ENCODE measurements at regions of chr14 and their contacts with region 1.

Region 1: DNA sequence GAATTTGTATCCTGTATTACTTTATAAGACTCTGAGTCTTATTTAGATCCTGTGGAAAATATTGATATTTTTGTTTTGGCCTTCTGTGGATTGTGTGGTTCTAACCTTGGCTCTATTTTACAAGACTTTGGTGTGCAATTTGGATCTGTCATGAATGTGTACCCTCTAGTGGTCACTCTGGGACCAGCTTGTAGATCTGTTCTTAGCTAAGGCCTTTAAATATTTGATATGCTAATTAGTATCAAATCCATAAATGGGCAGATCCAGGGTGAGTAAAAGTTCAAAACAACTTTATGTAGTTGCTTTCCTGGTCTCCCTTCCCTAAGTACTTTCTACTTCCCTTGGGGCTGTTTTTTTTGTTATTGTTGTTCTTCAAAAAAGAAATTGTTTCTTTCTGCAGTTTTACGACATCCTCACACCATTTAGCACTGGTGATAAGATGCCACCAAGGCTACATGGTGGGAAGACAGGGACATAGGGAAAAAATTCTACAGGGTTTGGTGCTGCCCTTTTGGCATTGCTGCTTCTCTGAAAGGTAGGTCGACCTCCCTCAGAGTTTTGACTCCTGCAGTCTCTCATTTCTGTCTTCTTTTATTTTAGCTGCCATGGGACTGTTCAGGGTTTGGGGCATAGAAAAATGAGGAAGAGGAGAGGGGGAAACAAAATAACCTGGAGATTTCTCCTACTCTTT is 238.5 kb downstream of the GPHN start:
- DNase-seq: peak; percentile 57
- ATAC-seq: peak; percentile 81
- H3K4me3 ChIP-seq: no peak overlapping the region
- H3K27ac ChIP-seq: no peak overlapping the region
- H3K4me1 ChIP-seq: no peaks in the 10 kb centered on the region
- H3K27me3 ChIP-seq: no peaks in the 10 kb centered on the region
- CTCF ChIP-seq: peak; percentile 30 to 81 (median 74); a peak in 5 of 6 replicates
- POLR2A ChIP-seq: no peak
- RAD21 ChIP-seq: peak; percentile 52

Region 2: DNA sequence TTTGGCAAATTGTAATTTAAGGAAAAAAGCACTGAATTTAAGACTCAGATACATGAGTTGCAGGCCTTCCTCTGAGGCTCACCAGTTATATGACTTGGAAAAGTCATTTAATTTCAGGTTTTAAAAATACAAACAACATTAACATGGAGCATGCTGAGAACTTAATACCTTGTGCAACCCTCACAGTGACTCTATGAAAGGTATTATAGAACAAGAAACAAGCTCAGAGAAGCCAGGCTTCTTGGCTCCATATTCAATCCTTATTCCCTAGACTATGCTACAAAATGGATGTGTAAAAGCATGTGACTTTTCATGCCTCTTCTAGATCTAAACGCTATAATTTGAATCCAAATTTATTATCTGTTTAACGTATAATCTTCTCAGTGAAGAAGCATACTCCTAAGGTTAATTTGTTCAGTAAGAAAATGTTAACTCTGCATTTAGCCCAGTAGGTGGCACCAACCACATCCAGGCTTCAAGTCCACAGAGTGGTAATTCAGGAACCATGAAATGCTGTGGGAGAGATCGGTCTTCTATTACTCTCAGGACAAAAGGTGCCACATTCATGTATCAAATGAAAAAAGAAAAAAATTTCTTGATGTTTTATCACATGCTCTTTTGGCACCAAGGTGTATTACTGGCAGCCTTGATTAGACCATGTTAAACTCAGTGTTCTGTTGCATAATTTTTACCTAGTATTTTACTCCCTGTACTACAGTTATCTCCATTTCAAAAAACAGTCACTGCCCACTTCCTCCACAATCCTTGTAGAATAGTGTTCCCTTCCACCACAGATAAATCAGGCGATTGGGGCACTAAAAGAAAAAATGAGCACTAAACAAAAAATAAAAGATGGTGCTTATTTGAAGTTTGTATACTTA is 251.0 kb before region 1 on chr14:
- CTCF ChIA-PET with region 1: no interaction called
- POLR2A ChIA-PET with region 1: no interaction called
- RAD21 ChIA-PET with region 1: no interaction called
- intact Hi-C with region 1: loop called (anchors 10 kb)
- DNase-seq: peak; percentile 39
- ATAC-seq: peak; percentile 98
- H3K4me3 ChIP-seq: no peak overlapping the region
- H3K27ac ChIP-seq: no peak overlapping the region
- H3K4me1 ChIP-seq: no peaks in the 10 kb centered on the region
- H3K27me3 ChIP-seq: no peaks in the 10 kb centered on the region
- CTCF ChIP-seq: peak; percentile 54 to 80 (median 68); a peak in 5 of 6 replicates
- POLR2A ChIP-seq: no peak
- RAD21 ChIP-seq: peak; percentile 71

Region 3: GRCh38 chr14:66624299-66624937 is 122.0 kb before region 1 on chr14:
- CTCF ChIA-PET with region 1: interaction called, 6 read pairs
- POLR2A ChIA-PET with region 1: no interaction called
- RAD21 ChIA-PET with region 1: interaction called in 1 of 2 experiments, 4 read pairs
- intact Hi-C with region 1: loop called (anchors 10 kb)
- DNase-seq: peak; percentile 48
- ATAC-seq: peak; percentile 98
- H3K4me3 ChIP-seq: no peak overlapping the region
- H3K27ac ChIP-seq: no peak overlapping the region
- H3K4me1 ChIP-seq: no peaks in the 10 kb centered on the region
- H3K27me3 ChIP-seq: no peaks in the 10 kb centered on the region
- CTCF ChIP-seq: peak; percentile 65 to 74 (median 67)
- POLR2A ChIP-seq: no peak
- RAD21 ChIP-seq: peak; percentile 80

Region 4: GRCh38 chr14:66758031-66758613 is 11.7 kb after region 1 on chr14:
- CTCF ChIA-PET with region 1: interaction called, 16 read pairs
- POLR2A ChIA-PET with region 1: no interaction called
- RAD21 ChIA-PET with region 1: no interaction called
- intact Hi-C with region 1: no loop called
- DNase-seq: no peak
- ATAC-seq: peak; percentile 65; the same call in 1 of the 2 replicates
- H3K4me3 ChIP-seq: no peak overlapping the region
- H3K27ac ChIP-seq: no peak overlapping the region
- H3K4me1 ChIP-seq: no peaks in the 10 kb centered on the region
- H3K27me3 ChIP-seq: no peaks in the 10 kb centered on the region
- CTCF ChIP-seq: peak in 2 of 3 experiments; percentile 28 to 37; a peak in 3 of 6 replicates
- POLR2A ChIP-seq: no peak
- RAD21 ChIP-seq: no peak

Measured in HCT116 (cell line).